Activated T-helper 1 cell treated with anti-CD3 and anti-CD28 coated beads, Interleukin-12 subunit alpha, Interleukin-12 subunit beta, Interleukin-2, Interleukin-4 antibody, amounts not matched to agents 30 ng/mL and 10 ng/mL and 1 ng/mL, durations not matched to agents 14 hours and 24 hours and 36 hours (primary cell): ENCODE measurements at regions of chr17 and their contacts with region 1.

Region 1: GRCh38 chr17:32319548-32319905 is 22.4 kb downstream of the C17orf75 start:
- DNase-seq: peak; percentile 69
- H3K4me3 Mint-ChIP-seq: peak overlapping the region; percentile 83
- H3K27ac Mint-ChIP-seq: peak overlapping the region; percentile 18
- H3K4me1 Mint-ChIP-seq: peaks cover 24% of the 10 kb centered on the region
- H3K27me3 Mint-ChIP-seq: peaks cover 13% of the 10 kb centered on the region

Region 2: GRCh38 chr17:32206861-32207260 is 112.7 kb before region 1 on chr17:
- intact Hi-C with region 1: loop called (anchors 2 kb)
- DNase-seq: no peak
- H3K4me3 Mint-ChIP-seq: no peak overlapping the region
- H3K27ac Mint-ChIP-seq: no peak overlapping the region
- H3K4me1 Mint-ChIP-seq: no peaks in the 10 kb centered on the region
- H3K27me3 Mint-ChIP-seq: no peaks in the 10 kb centered on the region

Region 3: DNA sequence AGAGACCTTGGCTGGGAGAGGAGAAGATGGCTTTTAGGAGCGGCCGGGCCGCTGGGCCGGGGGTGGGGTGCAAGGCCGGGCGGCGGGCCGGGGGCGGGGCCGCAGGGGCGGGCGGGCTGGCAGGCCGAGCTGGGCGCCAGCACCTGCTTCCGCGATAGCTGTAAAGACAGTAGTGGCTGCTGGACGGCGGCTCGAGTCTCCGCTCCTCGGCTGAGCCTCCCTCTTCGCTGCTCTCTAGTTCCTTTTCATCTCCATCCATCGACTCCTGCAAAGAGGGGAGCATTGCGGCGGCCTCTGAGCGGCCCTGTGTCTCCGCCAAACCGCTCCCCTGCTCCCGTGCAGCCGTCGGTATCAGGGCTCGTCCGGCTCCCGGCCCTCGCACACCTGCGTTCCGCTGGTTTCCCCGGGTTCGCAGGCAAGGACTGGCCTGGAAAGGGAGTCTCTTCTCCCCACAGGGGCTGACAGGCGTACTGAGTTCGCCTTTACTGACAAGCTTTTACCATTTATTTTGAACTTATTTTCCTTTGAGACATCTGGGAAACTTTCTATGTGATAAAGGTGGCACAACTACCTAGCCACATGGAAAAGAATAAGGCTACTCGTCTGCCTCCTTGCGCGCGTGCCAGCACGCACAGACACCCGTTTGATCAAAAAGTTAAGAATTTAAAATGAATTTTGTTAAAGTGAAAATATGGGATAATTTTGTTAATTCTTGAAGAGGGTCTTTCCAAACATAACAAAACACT is 22.5 kb after region 1 on chr17 and contains the start of gene C17orf75:
- intact Hi-C with region 1: loop called (anchors 2 kb)
- DNase-seq: peak; percentile 72
- H3K4me3 Mint-ChIP-seq: peak within 1 kb of the TSS; percentile 94
- H3K27ac Mint-ChIP-seq: peak within 1 kb of the TSS; percentile 97
- H3K4me1 Mint-ChIP-seq: peaks cover 27% of the 10 kb centered on the region
- H3K27me3 Mint-ChIP-seq: no peaks in the 10 kb centered on the region
- total RNA-seq, gene C17orf75: 34.1 and 37.6 TPM in 2 replicates

Region 4: GRCh38 chr17:32370426-32370825 is 50.9 kb after region 1 on chr17:
- intact Hi-C with region 1: no loop called
- DNase-seq: no peak
- H3K4me3 Mint-ChIP-seq: no peak overlapping the region
- H3K27ac Mint-ChIP-seq: no peak overlapping the region
- H3K4me1 Mint-ChIP-seq: peaks cover 23% of the 10 kb centered on the region
- H3K27me3 Mint-ChIP-seq: no peaks in the 10 kb centered on the region